Natural killer cell (primary cell): ENCODE measurements at regions of chr2 and their contacts with region 1.

Region 1: GRCh38 chr2:134245340-134245984 is 8.4 kb upstream of the MGAT5 start:
- DNase-seq: peak; percentile 62 to 86
- ATAC-seq: peak; percentile 71 to 77 (median 75)
- H3K4me3 ChIP-seq: no peak overlapping the region
- H3K4me3 Mint-ChIP-seq: no peak overlapping the region
- H3K27ac ChIP-seq: no peak overlapping the region
- H3K27ac Mint-ChIP-seq: peak overlapping the region; percentile 16 to 42
- H3K4me1 ChIP-seq: peaks cover 42% of the 10 kb centered on the region
- H3K4me1 Mint-ChIP-seq: peaks cover 55 to 57% of the 10 kb centered on the region in 2 donors
- H3K27me3 ChIP-seq: no peaks in the 10 kb centered on the region
- H3K27me3 Mint-ChIP-seq: no peaks in the 10 kb centered on the region
- CTCF ChIP-seq: peak; percentile 91

Region 2: GRCh38 chr2:133886735-133887660 is 358.5 kb before region 1 on chr2:
- intact Hi-C with region 1: loop called (anchors 10 kb)
- DNase-seq: peak in 1 of 2 donors; percentile 68
- ATAC-seq: peak in 1 of 3 donors; percentile 44
- H3K4me3 ChIP-seq: no peak overlapping the region
- H3K4me3 Mint-ChIP-seq: no peak overlapping the region
- H3K27ac ChIP-seq: no peak overlapping the region
- H3K27ac Mint-ChIP-seq: no peak overlapping the region
- H3K4me1 ChIP-seq: no peaks in the 10 kb centered on the region
- H3K4me1 Mint-ChIP-seq: no peaks in the 10 kb centered on the region
- H3K27me3 ChIP-seq: no peaks in the 10 kb centered on the region
- H3K27me3 Mint-ChIP-seq: peaks cover 11 to 19% of the 10 kb centered on the region in 2 donors
- CTCF ChIP-seq: no peak

Region 3: GRCh38 chr2:134287323-134287722 is 41.9 kb after region 1 on chr2:
- intact Hi-C with region 1: loop called (anchors 5 kb)
- DNase-seq: no peak
- ATAC-seq: no peak
- H3K4me3 ChIP-seq: no peak overlapping the region
- H3K4me3 Mint-ChIP-seq: no peak overlapping the region
- H3K27ac ChIP-seq: no peak overlapping the region
- H3K27ac Mint-ChIP-seq: no peak overlapping the region
- H3K4me1 ChIP-seq: peaks cover 47% of the 10 kb centered on the region
- H3K4me1 Mint-ChIP-seq: peaks cover 16 to 27% of the 10 kb centered on the region in 2 donors
- H3K27me3 ChIP-seq: peaks cover 17% of the 10 kb centered on the region
- H3K27me3 Mint-ChIP-seq: peaks cover 19 to 39% of the 10 kb centered on the region in 2 donors
- CTCF ChIP-seq: no peak

Region 4: GRCh38 chr2:134375935-134376334 is 130.5 kb after region 1 on chr2:
- intact Hi-C with region 1: no loop called
- DNase-seq: no peak
- ATAC-seq: no peak
- H3K4me3 ChIP-seq: no peak overlapping the region
- H3K4me3 Mint-ChIP-seq: no peak overlapping the region
- H3K27ac ChIP-seq: no peak overlapping the region
- H3K27ac Mint-ChIP-seq: no peak overlapping the region
- H3K4me1 ChIP-seq: no peaks in the 10 kb centered on the region
- H3K4me1 Mint-ChIP-seq: peaks cover 0 to 5% of the 10 kb centered on the region in 2 donors
- H3K27me3 ChIP-seq: no peaks in the 10 kb centered on the region
- H3K27me3 Mint-ChIP-seq: no peaks in the 10 kb centered on the region
- CTCF ChIP-seq: no peak

Region 5: DNA sequence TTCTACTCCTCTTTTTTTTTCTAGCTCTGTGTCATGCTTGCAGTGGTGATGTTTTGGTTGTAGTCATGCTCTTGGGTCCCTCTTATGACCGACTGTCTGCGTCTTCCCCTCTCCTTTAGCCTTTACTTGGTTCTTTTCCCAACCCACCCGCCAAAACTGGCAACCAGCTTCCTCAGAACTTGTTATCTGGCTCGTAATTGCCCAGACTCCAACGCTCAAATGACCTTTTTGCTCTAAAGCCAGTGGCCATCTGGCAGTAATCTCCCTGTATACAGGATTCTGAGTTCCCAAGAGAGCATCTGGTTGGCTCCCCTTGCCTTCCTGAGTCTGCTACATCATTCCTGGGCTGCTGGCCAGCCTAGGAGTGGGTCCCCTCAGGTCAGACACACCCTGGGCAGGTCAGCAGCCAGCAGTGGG is 155.6 kb after region 1 on chr2:
- intact Hi-C with region 1: no loop called
- DNase-seq: no peak
- ATAC-seq: no peak
- H3K4me3 ChIP-seq: no peak overlapping the region
- H3K4me3 Mint-ChIP-seq: no peak overlapping the region
- H3K27ac ChIP-seq: no peak overlapping the region
- H3K27ac Mint-ChIP-seq: no peak overlapping the region
- H3K4me1 ChIP-seq: peaks cover 6% of the 10 kb centered on the region
- H3K4me1 Mint-ChIP-seq: peaks cover 8 to 12% of the 10 kb centered on the region in 2 donors
- H3K27me3 ChIP-seq: no peaks in the 10 kb centered on the region
- H3K27me3 Mint-ChIP-seq: no peaks in the 10 kb centered on the region
- CTCF ChIP-seq: no peak

Region 6: GRCh38 chr2:134411828-134412638 is 166.6 kb after region 1 on chr2:
- intact Hi-C with region 1: loop called (anchors 10 kb)
- DNase-seq: peak; percentile 34 to 84
- ATAC-seq: peak; percentile 86 to 95 (median 93)
- H3K4me3 ChIP-seq: no peak overlapping the region
- H3K4me3 Mint-ChIP-seq: no peak overlapping the region
- H3K27ac ChIP-seq: peak overlapping the region; percentile 2
- H3K27ac Mint-ChIP-seq: no peak overlapping the region
- H3K4me1 ChIP-seq: peaks cover 28% of the 10 kb centered on the region
- H3K4me1 Mint-ChIP-seq: peaks cover 45 to 46% of the 10 kb centered on the region in 2 donors
- H3K27me3 ChIP-seq: no peaks in the 10 kb centered on the region
- H3K27me3 Mint-ChIP-seq: no peaks in the 10 kb centered on the region
- CTCF ChIP-seq: peak; percentile 43